Psoas muscle (tissue), 8 donors: ENCODE measurements at regions of chr18 and their contacts with region 1.

Region 1: GRCh38 chr18:24219561-24220317 is 80.9 kb downstream of the CABYR start:
- DNase-seq: peak; percentile 46 to 76
- ATAC-seq: peak; percentile 99 to 100 (median 99)
- H3K4me3 ChIP-seq: no peak overlapping the region
- H3K27ac ChIP-seq: peak overlapping the region; percentile 76
- H3K4me1 ChIP-seq: peaks cover 38% of the 10 kb centered on the region
- H3K27me3 ChIP-seq: no peaks in the 10 kb centered on the region
- CTCF ChIP-seq: peak; percentile 18

Region 2: GRCh38 chr18:24075731-24076130 is 144.0 kb before region 1 on chr18:
- intact Hi-C with region 1: no loop called
- DNase-seq: no peak
- ATAC-seq: peak in 3 of 4 donors; percentile 11 to 41 (median 23)
- H3K4me3 ChIP-seq: no peak overlapping the region
- H3K27ac ChIP-seq: peak overlapping the region; percentile 60
- H3K4me1 ChIP-seq: peaks cover 6% of the 10 kb centered on the region
- H3K27me3 ChIP-seq: no peaks in the 10 kb centered on the region
- CTCF ChIP-seq: no peak

Region 3: DNA sequence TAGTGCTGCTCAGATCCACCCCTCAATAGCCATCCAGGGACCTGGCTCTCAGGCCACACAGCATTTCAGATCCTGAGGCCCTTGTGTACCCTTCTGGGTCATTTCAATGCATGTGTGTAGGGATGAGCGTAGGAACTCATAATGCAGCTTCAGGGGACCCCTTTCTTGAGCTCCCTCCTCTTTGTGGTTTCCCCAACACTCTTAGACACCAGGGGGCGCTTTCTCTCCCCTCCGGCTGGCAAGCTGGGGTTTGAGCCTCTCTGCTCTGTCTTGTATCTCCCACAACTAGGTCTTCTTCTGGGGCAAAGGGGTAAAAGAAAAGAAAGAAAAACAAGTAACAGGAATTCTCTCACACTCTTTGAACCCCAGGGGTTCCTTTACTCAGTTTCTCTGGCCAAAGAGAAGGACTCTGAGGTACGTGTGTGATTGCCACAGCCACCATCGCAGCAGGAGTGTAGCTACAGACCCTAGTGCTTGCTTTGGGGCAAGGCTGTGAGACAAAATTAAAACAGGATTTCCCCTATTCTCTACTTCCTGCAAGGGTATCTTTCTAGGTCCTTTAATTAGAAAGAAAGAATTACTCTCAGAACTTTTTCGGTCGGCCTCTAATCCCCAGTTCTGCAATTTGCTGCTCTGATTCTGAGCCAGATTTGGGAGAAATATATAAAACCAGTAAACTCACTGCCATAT is 42.9 kb before region 1 on chr18:
- intact Hi-C with region 1: loop called (anchors 2 to 5 kb)
- DNase-seq: peak; percentile 50 to 63
- ATAC-seq: peak; percentile 71 to 82 (median 78)
- H3K4me3 ChIP-seq: no peak overlapping the region
- H3K27ac ChIP-seq: no peak overlapping the region
- H3K4me1 ChIP-seq: peaks cover 12% of the 10 kb centered on the region
- H3K27me3 ChIP-seq: no peaks in the 10 kb centered on the region
- CTCF ChIP-seq: peak; percentile 79